Naive thymus-derived CD4-positive, alpha-beta T cell (primary cell): ENCODE measurements at regions of chr5 and their contacts with region 1.

Region 1: GRCh38 chr5:120457839-120458507 is 6.1 kb upstream of the PRR16 start:
- DNase-seq: peak in 8 of 9 donors; percentile 10 to 52 (median 18)
- ATAC-seq: peak; percentile 71
- H3K4me3 ChIP-seq: peak overlapping the region; percentile 43
- H3K4me3 Mint-ChIP-seq: peak overlapping the region; percentile 44 to 80 (median 78)
- H3K27ac ChIP-seq: no peak overlapping the region
- H3K27ac Mint-ChIP-seq: peak overlapping the region in 5 of 9 donors; percentile 11 to 60 (median 40)
- H3K4me1 ChIP-seq: no peaks in the 10 kb centered on the region
- H3K4me1 Mint-ChIP-seq: peaks cover 0 to 10% (median 4%) of the 10 kb centered on the region in 7 donors
- H3K27me3 ChIP-seq: no peaks in the 10 kb centered on the region
- H3K27me3 Mint-ChIP-seq: peaks cover 4 to 21% (median 10%) of the 10 kb centered on the region in 5 donors

Region 2: GRCh38 chr5:119470851-119471451 is 987.0 kb before region 1 on chr5:
- CTCF ChIA-PET with region 1: no interaction called
- POLR2A ChIA-PET with region 1: no interaction called
- intact Hi-C with region 1: loop called in 1 of 2 experiments (anchors 5 kb)
- DNase-seq: peak in 5 of 9 donors; percentile 16 to 29 (median 20)
- ATAC-seq: no peak
- H3K4me3 ChIP-seq: no peak overlapping the region
- H3K4me3 Mint-ChIP-seq: no peak overlapping the region
- H3K27ac ChIP-seq: no peak overlapping the region
- H3K27ac Mint-ChIP-seq: no peak overlapping the region
- H3K4me1 ChIP-seq: no peaks in the 10 kb centered on the region
- H3K4me1 Mint-ChIP-seq: peaks cover 3 to 26% (median 22%) of the 10 kb centered on the region in 7 donors
- H3K27me3 ChIP-seq: no peaks in the 10 kb centered on the region
- H3K27me3 Mint-ChIP-seq: no peaks in the 10 kb centered on the region

Region 3: DNA sequence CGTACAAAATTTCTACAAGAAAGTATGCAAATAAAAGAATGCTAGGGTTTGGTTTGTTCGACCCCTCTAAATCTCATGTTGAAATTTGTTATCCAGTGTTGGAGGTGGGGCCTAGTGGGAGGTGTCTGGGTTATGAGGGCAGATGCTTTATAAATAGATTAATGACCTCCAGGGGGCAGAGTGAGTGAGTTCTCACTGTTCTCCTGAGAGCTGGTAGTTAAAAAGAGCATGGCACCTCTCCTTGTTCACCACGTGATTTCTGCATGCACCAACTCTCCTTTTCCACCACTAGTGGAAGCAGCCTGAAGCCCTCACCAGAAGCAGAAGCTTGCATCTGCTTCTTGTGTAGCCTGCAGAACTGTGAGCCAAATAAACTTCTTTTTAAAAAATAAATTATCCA is 879.0 kb before region 1 on chr5:
- CTCF ChIA-PET with region 1: no interaction called
- POLR2A ChIA-PET with region 1: no interaction called
- intact Hi-C with region 1: loop called in 1 of 2 experiments (anchors 10 kb)
- DNase-seq: peak in 1 of 9 donors; percentile 1
- ATAC-seq: no peak
- H3K4me3 ChIP-seq: no peak overlapping the region
- H3K4me3 Mint-ChIP-seq: no peak overlapping the region
- H3K27ac ChIP-seq: no peak overlapping the region
- H3K27ac Mint-ChIP-seq: no peak overlapping the region
- H3K4me1 ChIP-seq: no peaks in the 10 kb centered on the region
- H3K4me1 Mint-ChIP-seq: no peaks in the 10 kb centered on the region
- H3K27me3 ChIP-seq: peaks cover 0 to 3% of the 10 kb centered on the region in 2 donors
- H3K27me3 Mint-ChIP-seq: peaks cover 5 to 18% (median 13%) of the 10 kb centered on the region in 5 donors

Region 4: GRCh38 chr5:120388016-120388781 is 69.8 kb before region 1 on chr5:
- CTCF ChIA-PET with region 1: no interaction called
- POLR2A ChIA-PET with region 1: no interaction called
- intact Hi-C with region 1: loop called in 1 of 2 experiments (anchors 1 kb)
- DNase-seq: no peak
- ATAC-seq: peak; percentile 46
- H3K4me3 ChIP-seq: no peak overlapping the region
- H3K4me3 Mint-ChIP-seq: peak overlapping the region in 1 of 10 donors; percentile 71
- H3K27ac ChIP-seq: no peak overlapping the region
- H3K27ac Mint-ChIP-seq: peak overlapping the region in 1 of 9 donors; percentile 66
- H3K4me1 ChIP-seq: no peaks in the 10 kb centered on the region
- H3K4me1 Mint-ChIP-seq: peaks cover 0 to 16% (median 0%) of the 10 kb centered on the region in 7 donors
- H3K27me3 ChIP-seq: no peaks in the 10 kb centered on the region
- H3K27me3 Mint-ChIP-seq: no peaks in the 10 kb centered on the region

Region 5: GRCh38 chr5:120413706-120414105 is 44.3 kb before region 1 on chr5:
- CTCF ChIA-PET with region 1: no interaction called
- POLR2A ChIA-PET with region 1: no interaction called
- intact Hi-C with region 1: no loop called
- DNase-seq: no peak
- ATAC-seq: no peak
- H3K4me3 ChIP-seq: no peak overlapping the region
- H3K4me3 Mint-ChIP-seq: no peak overlapping the region
- H3K27ac ChIP-seq: no peak overlapping the region
- H3K27ac Mint-ChIP-seq: no peak overlapping the region
- H3K4me1 ChIP-seq: no peaks in the 10 kb centered on the region
- H3K4me1 Mint-ChIP-seq: no peaks in the 10 kb centered on the region
- H3K27me3 ChIP-seq: no peaks in the 10 kb centered on the region
- H3K27me3 Mint-ChIP-seq: no peaks in the 10 kb centered on the region

Region 6: GRCh38 chr5:120717381-120717780 is 259.4 kb after region 1 on chr5:
- CTCF ChIA-PET with region 1: no interaction called
- POLR2A ChIA-PET with region 1: no interaction called
- intact Hi-C with region 1: no loop called
- DNase-seq: no peak
- ATAC-seq: no peak
- H3K4me3 ChIP-seq: no peak overlapping the region
- H3K4me3 Mint-ChIP-seq: no peak overlapping the region
- H3K27ac ChIP-seq: no peak overlapping the region
- H3K27ac Mint-ChIP-seq: no peak overlapping the region
- H3K4me1 ChIP-seq: no peaks in the 10 kb centered on the region
- H3K4me1 Mint-ChIP-seq: no peaks in the 10 kb centered on the region
- H3K27me3 ChIP-seq: no peaks in the 10 kb centered on the region
- H3K27me3 Mint-ChIP-seq: no peaks in the 10 kb centered on the region